ENCODE measurements at regions of chr17 and their contacts with region 1.

Region 1: GRCh38 chr17:39621523-39622379 is 5.0 kb upstream of the PPP1R1B start:
- DNase-seq: peak; percentile 60 to 89
- H3K4me3 ChIP-seq: no peak overlapping the region
- H3K27ac ChIP-seq: no peak overlapping the region
- H3K4me1 ChIP-seq: 0 out of 2 replicates have a peak, but pooled peaks cover 8% of the 10 kb centered on the region
- H3K27me3 ChIP-seq: peaks cover 5% of the 10 kb centered on the region; the same call in 1 of the 2 replicates
- CTCF ChIP-seq: peak; percentile 100

Region 2: GRCh38 chr17:39547713-39548478 is 73.9 kb before region 1 on chr17:
- CTCF ChIA-PET with region 1: interaction called, 7 read pairs
- POLR2A ChIA-PET with region 1: interaction called, 4 read pairs
- intact Hi-C with region 1: loop called (anchors 1 kb)
- DNase-seq: peak; percentile 49 to 67
- H3K4me3 ChIP-seq: no peak overlapping the region
- H3K27ac ChIP-seq: no peak overlapping the region
- H3K4me1 ChIP-seq: no peaks in the 10 kb centered on the region
- H3K27me3 ChIP-seq: no peaks in the 10 kb centered on the region
- CTCF ChIP-seq: peak; percentile 98

Region 3: DNA sequence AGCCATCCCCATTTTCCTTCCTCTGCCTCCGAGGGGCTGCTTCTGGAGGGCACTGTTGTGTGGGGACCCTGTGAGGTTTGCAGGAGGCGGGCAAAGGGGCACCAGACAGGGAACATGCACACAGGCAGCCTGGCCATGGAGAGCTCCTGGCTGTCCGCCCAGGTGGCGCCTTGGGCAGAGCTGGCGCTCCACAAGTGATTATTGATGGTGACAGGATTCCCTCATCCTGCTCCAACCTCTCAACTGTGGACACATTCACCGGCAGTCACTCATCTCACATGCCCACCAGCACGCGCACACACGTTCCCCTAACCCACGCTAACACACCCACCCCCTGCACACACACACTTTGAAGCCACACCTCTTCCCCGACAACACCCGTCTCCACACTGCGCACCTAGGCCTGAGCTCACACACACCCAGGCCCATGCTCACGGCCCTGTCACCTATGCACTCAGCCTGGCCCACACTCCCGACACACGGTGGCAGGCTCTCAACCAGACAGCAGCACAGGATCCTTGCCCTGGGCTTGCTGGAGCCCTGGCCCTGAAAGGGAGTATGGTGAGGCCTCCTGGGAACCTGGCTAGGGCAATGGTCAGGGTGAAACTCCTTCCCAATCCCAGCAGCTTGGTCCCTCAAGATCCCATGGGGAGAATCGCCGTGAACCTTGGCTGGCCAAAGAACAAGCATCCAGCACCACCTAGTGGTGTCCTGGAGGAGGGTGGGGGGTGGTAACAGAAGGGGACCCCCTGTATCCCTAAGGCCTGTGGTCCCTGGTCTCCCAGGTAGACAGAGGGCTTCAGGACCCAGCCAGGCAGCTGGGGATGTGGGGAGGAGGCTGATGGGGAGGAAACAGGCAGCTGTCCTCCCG is 50.1 kb after region 1 on chr17:
- CTCF ChIA-PET with region 1: interaction called, 5 read pairs
- POLR2A ChIA-PET with region 1: no interaction called
- intact Hi-C with region 1: loop called (anchors 2 kb)
- DNase-seq: no peak
- H3K4me3 ChIP-seq: no peak overlapping the region
- H3K27ac ChIP-seq: no peak overlapping the region
- H3K4me1 ChIP-seq: peaks cover 52% of the 10 kb centered on the region
- H3K27me3 ChIP-seq: no peaks in the 10 kb centered on the region
- CTCF ChIP-seq: peak; percentile 63

Region 4: DNA sequence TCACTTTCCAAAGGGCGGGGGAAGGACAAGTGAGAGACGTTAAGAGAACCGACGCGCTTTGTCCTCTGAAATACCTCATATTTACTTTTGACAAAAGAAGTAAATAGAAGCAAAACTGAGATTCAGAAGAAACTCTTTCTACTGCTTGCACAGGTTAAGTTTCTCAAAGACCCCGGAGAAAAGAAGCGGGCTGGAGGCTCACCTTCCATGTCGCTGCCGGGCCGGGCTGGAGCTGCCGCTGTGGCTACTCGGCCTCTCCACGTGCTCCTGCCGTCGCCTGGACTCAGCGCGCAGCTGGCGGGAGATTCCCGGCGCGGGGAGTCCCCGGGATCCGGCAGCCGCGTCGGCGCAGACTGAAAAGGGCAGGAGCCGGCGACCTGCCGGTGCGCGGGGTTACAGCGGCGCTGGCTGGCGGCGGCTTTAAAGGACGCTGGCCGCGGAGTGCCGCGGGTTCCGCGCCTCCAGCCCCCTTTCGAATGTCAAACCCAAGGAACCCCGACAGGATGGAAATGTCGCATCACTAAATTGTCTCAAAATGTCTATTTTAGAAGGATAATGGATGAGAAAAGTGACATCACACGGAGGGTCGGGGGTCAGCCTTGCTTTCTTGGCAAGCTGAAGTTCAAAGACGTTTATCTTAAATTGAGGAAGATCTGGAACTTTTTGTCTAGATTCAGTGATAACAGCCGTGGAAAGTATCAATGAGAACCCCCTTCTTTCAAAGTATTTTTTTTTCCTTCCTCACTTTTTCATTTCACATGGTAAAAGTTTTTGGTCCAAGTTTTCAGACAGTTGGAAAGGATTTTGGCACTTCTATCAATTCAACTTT is 242.4 kb after region 1 on chr17 and contains the start of gene IKZF3:
- CTCF ChIA-PET with region 1: interaction called, 3 read pairs
- POLR2A ChIA-PET with region 1: no interaction called
- intact Hi-C with region 1: loop called (anchors 2 kb)
- DNase-seq: peak in 1 of 2 experiments; percentile 55
- H3K4me3 ChIP-seq: peak within 1 kb of the TSS; percentile 46; the same call in 1 of the 2 replicates
- H3K27ac ChIP-seq: no peak within 1 kb of the TSS
- H3K4me1 ChIP-seq: peaks cover 4% of the 10 kb centered on the region; the same call in 1 of the 2 replicates
- H3K27me3 ChIP-seq: peaks cover 27% of the 10 kb centered on the region
- CTCF ChIP-seq: 0 out of 2 replicates have a peak, but pooled peaks have one; percentile 32
- total RNA-seq, gene IKZF3: 0.04 TPM in 1 of 2 replicates, not detected in the other

Region 5: GRCh38 chr17:40168262-40168832 is 546.6 kb after region 1 on chr17:
- CTCF ChIA-PET with region 1: no interaction called
- POLR2A ChIA-PET with region 1: no interaction called
- intact Hi-C with region 1: loop called (anchors 5 kb)
- DNase-seq: peak; percentile 50 to 92
- H3K4me3 ChIP-seq: no peak overlapping the region
- H3K27ac ChIP-seq: no peak overlapping the region
- H3K4me1 ChIP-seq: peaks cover 6% of the 10 kb centered on the region; the same call in 1 of the 2 replicates
- H3K27me3 ChIP-seq: no peaks in the 10 kb centered on the region
- CTCF ChIP-seq: peak; percentile 90